ENCODE measurements at regions of chr10 and their contacts with region 1.

Region 1: GRCh38 chr10:62268399-62269114 is at the start of gene RTKN2:
- DNase-seq: peak; percentile 40 to 87 (median 58)
- ATAC-seq: peak; percentile 83
- H3K4me3 ChIP-seq: peak within 1 kb of the TSS; percentile 71
- H3K4me3 Mint-ChIP-seq: peak within 1 kb of the TSS; percentile 90
- H3K27ac ChIP-seq: no peak within 1 kb of the TSS
- H3K27ac Mint-ChIP-seq: no peak within 1 kb of the TSS
- H3K4me1 ChIP-seq: peaks cover 16% of the 10 kb centered on the region
- H3K4me1 Mint-ChIP-seq: peaks cover 22% of the 10 kb centered on the region
- H3K27me3 ChIP-seq: no peaks in the 10 kb centered on the region
- H3K27me3 Mint-ChIP-seq: peaks cover 27% of the 10 kb centered on the region
- CTCF ChIP-seq: no peak
- total RNA-seq, gene RTKN2: 3.7 to 3.9 TPM

Region 2: GRCh38 chr10:62306663-62307062 is 38.1 kb after region 1 on chr10:
- CTCF ChIA-PET with region 1: no interaction called
- POLR2A ChIA-PET with region 1: interaction called, 3 read pairs
- intact Hi-C with region 1: loop called in 1 of 2 experiments (anchors 5 kb)
- DNase-seq: peak in 12 of 14 experiments; percentile 3 to 38 (median 9)
- ATAC-seq: peak; percentile 51
- H3K4me3 ChIP-seq: no peak overlapping the region
- H3K4me3 Mint-ChIP-seq: peak overlapping the region; percentile 27
- H3K27ac ChIP-seq: no peak overlapping the region
- H3K27ac Mint-ChIP-seq: peak overlapping the region; percentile 11
- H3K4me1 ChIP-seq: peaks cover 15% of the 10 kb centered on the region
- H3K4me1 Mint-ChIP-seq: peaks cover 46% of the 10 kb centered on the region
- H3K27me3 ChIP-seq: no peaks in the 10 kb centered on the region
- H3K27me3 Mint-ChIP-seq: no peaks in the 10 kb centered on the region
- CTCF ChIP-seq: no peak

Region 3: GRCh38 chr10:62414359-62414758 is 145.8 kb after region 1 on chr10:
- CTCF ChIA-PET with region 1: no interaction called
- POLR2A ChIA-PET with region 1: no interaction called
- intact Hi-C with region 1: loop called (anchors 2 to 5 kb)
- DNase-seq: peak in 2 of 14 experiments; percentile 4 to 9
- ATAC-seq: no peak
- H3K4me3 ChIP-seq: no peak overlapping the region
- H3K4me3 Mint-ChIP-seq: no peak overlapping the region
- H3K27ac ChIP-seq: no peak overlapping the region
- H3K27ac Mint-ChIP-seq: no peak overlapping the region
- H3K4me1 ChIP-seq: no peaks in the 10 kb centered on the region
- H3K4me1 Mint-ChIP-seq: no peaks in the 10 kb centered on the region
- H3K27me3 ChIP-seq: no peaks in the 10 kb centered on the region
- H3K27me3 Mint-ChIP-seq: peaks cover 44% of the 10 kb centered on the region
- CTCF ChIP-seq: peak; percentile 12

Region 4: GRCh38 chr10:62426086-62426485 is 157.5 kb after region 1 on chr10:
- CTCF ChIA-PET with region 1: no interaction called
- POLR2A ChIA-PET with region 1: no interaction called
- intact Hi-C with region 1: loop called in 1 of 2 experiments (anchors 5 kb)
- DNase-seq: no peak
- ATAC-seq: no peak
- H3K4me3 ChIP-seq: no peak overlapping the region
- H3K4me3 Mint-ChIP-seq: no peak overlapping the region
- H3K27ac ChIP-seq: no peak overlapping the region
- H3K27ac Mint-ChIP-seq: no peak overlapping the region
- H3K4me1 ChIP-seq: no peaks in the 10 kb centered on the region
- H3K4me1 Mint-ChIP-seq: no peaks in the 10 kb centered on the region
- H3K27me3 ChIP-seq: no peaks in the 10 kb centered on the region
- H3K27me3 Mint-ChIP-seq: no peaks in the 10 kb centered on the region
- CTCF ChIP-seq: no peak

Region 5: DNA sequence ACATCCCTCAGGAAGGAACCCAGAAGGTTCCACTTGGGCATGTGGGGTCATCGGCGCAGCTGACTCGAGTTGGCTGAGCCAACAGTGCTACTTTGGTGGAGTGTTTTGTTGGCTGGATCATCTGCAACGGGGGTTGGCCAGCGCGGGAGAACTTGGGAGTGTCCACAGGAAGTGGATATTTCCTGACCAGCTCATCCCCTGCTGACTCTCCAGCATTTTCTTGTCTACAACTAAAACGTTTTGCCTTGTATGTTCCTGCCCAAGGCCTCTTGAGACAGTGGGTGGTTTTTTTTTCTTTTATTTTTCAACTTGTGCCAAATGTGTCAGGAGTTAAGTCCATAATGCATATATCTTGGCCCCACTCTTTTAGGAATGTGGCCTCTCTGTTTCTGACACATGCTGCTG is 314.2 kb after region 1 on chr10:
- CTCF ChIA-PET with region 1: no interaction called
- POLR2A ChIA-PET with region 1: no interaction called
- intact Hi-C with region 1: no loop called
- DNase-seq: no peak
- ATAC-seq: no peak
- H3K4me3 ChIP-seq: no peak overlapping the region
- H3K4me3 Mint-ChIP-seq: no peak overlapping the region
- H3K27ac ChIP-seq: no peak overlapping the region
- H3K27ac Mint-ChIP-seq: no peak overlapping the region
- H3K4me1 ChIP-seq: no peaks in the 10 kb centered on the region
- H3K4me1 Mint-ChIP-seq: no peaks in the 10 kb centered on the region
- H3K27me3 ChIP-seq: no peaks in the 10 kb centered on the region
- H3K27me3 Mint-ChIP-seq: no peaks in the 10 kb centered on the region
- CTCF ChIP-seq: no peak

Measured in CD4-positive, alpha-beta T cell (primary cell).